Mucosa of descending colon (tissue), 3 donors: ENCODE measurements at regions of chr20 and their contacts with region 1.

Region 1: DNA sequence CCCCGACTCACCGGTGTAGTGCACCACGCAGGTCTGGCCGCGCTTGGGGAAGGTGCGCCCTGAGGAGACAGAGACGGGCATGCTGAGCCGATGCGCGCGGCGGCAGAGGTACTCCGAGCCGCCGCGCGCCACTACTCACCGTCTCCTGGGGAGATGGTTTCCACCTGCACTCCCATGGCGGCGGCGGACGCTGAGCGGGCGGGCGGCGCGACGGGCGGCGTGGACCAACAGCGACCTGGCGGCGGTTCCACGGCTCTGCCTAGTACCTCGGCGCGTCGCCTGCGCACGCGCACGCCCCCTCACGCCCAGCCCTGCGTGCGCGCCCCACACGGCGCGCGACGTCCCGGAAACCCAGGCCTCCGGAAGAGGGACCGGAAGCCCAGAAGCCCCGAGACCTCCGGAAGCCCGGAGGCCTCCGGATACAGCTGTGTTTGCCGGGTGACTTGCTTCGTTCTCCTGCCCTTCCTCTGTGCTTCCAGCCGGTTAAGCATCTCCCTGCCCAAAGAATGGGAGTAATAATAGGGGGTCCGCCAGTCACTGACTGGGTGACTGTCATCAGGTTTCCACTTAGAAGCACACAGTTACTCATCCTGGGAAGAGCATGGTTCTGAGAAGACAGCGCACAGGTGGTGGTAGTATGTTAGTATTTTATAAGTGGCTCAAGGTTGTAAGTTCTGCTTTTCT is at the start of gene FKBP1A:
- DNase-seq: peak; percentile 93 to 96 (median 96)
- ATAC-seq: peak; percentile 98
- H3K4me3 ChIP-seq: peak within 1 kb of the TSS; percentile 88
- H3K4me1 ChIP-seq: peaks cover 37% of the 10 kb centered on the region
- CTCF ChIP-seq: peak; percentile 13
- total RNA-seq, gene FKBP1A: 168 to 326 (median 300) TPM

Region 2: GRCh38 chr20:884983-885952 is 507.7 kb before region 1 on chr20:
- intact Hi-C with region 1: no loop called
- DNase-seq: peak in 1 of 3 donors; percentile 5
- ATAC-seq: no peak
- H3K4me3 ChIP-seq: no peak overlapping the region
- H3K4me1 ChIP-seq: no peaks in the 10 kb centered on the region
- CTCF ChIP-seq: no peak

Region 3: DNA sequence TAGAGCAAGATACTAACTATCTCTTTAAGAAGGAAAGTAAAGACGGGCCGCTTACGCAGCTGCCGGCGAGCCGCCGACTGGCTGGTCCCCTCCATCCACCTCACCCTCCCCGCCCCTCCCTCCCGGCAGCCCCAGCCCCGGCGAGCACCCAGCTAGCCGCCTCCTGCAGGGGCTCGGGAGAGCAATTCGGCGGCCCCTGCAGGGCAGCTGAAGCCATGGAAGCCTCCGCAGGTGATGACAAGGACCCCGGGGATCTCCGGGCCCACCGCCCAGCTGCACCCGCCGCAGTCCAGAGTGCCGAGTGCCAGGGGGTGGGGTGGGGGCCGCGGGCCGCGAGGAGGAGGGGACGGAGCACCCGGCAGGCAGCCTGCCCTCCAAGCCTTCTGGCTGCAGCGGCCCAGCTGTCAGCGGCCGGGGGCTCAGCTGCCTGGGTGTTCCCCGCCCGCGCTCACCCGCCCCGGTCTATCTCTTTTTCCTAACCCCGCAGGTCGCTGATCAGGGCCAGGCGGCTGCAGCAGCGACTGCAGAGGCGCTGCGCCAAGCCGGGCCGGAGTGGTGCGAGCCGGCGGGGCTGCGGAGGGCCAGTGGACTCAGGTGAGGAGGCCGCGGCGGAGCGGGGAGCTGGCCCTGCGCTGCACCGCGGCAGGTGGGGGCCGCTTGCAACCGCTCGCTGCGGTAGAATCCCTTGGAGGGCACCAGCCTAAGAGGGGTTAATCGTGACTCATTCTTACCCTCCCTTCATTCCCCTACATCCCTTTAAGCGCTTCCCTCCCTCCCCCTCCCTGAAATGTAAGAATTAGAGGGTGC is 126.6 kb before region 1 on chr20 and contains the start of gene SNPH:
- intact Hi-C with region 1: no loop called
- DNase-seq: peak; percentile 79 to 85 (median 81)
- ATAC-seq: peak; percentile 95
- H3K4me3 ChIP-seq: peak within 1 kb of the TSS; percentile 36
- H3K4me1 ChIP-seq: peaks cover 5% of the 10 kb centered on the region
- CTCF ChIP-seq: no peak
- total RNA-seq, gene SNPH: 1.1 to 11.7 (median 2.2) TPM

Region 4: DNA sequence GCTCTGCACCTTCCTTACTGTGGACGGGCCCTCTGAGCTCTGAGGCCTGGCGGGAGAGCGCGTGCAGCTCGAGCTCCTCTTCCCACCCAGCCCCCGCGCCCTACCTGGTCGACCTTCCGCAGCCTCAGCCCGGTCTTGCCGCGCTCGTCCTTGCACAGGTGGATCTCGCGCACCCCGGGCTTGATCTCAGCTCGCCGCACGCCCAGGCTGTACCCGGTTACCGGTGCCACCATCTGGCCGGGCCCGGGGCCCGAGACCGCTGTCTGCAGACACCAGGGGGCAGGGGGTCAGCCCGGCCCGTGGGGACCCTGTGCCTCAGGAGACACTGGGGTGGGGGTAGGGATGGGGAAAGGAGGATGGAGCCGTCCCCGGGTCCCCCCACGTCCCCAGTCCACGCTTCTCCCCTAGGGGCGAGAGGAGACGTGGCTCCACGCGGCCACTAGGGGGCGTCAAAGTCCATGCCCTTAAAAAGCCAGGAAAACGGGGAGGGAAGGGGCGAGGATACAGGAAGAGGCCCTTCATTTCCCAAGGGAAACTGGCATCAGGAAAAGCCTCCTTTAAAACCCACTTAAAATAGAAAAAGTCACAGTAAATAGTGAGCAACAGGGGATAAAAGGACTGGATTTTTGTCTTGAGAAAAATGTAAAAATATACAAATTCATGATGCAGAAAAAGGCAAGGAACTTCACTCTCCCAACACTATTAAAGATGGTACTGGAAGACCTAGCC is 79.6 kb before region 1 on chr20:
- intact Hi-C with region 1: loop called in 1 of 2 experiments (anchors 5 kb)
- DNase-seq: peak; percentile 60 to 78 (median 75)
- ATAC-seq: peak; percentile 72
- H3K4me3 ChIP-seq: no peak overlapping the region
- H3K4me1 ChIP-seq: peaks cover 3% of the 10 kb centered on the region
- CTCF ChIP-seq: peak; percentile 89

Region 5: DNA sequence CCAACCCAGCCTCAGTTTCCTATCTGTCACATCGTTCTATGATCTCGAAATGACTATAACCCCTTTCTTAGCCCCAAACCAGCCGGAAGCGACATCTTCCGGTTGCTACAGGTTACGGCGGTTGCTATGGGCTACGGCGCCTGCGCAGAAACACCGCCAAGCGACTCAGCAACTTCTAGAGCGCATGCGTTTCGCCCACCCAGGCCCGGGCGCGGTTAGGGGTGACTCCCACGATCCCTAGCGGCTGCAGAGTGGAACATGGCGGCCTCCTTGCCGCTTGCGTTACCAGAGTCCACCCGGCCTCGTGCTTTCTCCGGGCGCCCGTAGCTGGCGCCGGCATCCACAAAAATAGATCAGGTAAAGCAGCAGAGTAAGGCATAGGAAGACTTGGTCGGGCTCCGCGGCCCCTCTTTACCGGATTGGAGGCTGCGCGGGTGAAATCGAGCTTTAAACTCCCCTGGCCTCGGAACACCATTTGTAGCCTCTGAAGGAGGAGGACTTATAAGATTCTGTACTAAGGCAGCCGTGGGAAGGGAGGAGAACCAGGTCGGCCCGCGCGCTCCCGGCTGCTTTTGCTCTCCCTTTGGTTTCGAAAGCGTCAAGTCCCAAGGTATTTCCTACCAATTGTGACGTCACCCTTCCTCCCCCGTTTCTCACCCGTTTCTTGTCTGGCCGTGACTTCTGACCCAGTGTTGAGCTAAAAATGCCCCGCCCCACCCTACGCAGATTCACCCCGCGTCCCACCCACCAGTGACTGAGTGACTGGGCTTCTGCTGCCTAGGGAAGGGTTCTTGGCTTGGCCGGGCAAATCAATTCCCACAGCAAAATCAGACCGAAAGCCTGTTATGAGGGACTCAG is 67.6 kb before region 1 on chr20:
- intact Hi-C with region 1: loop called in 1 of 2 experiments (anchors 5 kb)
- DNase-seq: peak; percentile 97 to 99 (median 97)
- ATAC-seq: peak; percentile 73
- H3K4me3 ChIP-seq: peak overlapping the region; percentile 60
- H3K4me1 ChIP-seq: peaks cover 35% of the 10 kb centered on the region
- CTCF ChIP-seq: no peak